Heart left ventricle (tissue), 16 donors: ENCODE measurements at regions of chr5 and their contacts with region 1.

Region 1: GRCh38 chr5:143413958-143414669 is 10.6 kb upstream of the NR3C1 start:
- DNase-seq: peak in 3 of 5 donors; percentile 28 to 53 (median 44)
- ATAC-seq: peak; percentile 58 to 87 (median 76)
- H3K4me3 ChIP-seq: no peak overlapping the region
- H3K27ac ChIP-seq: peak overlapping the region in 6 of 12 donors; percentile 3 to 36 (median 23)
- H3K4me1 ChIP-seq: peaks cover 0 to 20% (median 7%) of the 10 kb centered on the region in 12 donors
- H3K27me3 ChIP-seq: no peaks in the 10 kb centered on the region
- CTCF ChIP-seq: no peak
- POLR2A ChIP-seq: no peak

Region 2: DNA sequence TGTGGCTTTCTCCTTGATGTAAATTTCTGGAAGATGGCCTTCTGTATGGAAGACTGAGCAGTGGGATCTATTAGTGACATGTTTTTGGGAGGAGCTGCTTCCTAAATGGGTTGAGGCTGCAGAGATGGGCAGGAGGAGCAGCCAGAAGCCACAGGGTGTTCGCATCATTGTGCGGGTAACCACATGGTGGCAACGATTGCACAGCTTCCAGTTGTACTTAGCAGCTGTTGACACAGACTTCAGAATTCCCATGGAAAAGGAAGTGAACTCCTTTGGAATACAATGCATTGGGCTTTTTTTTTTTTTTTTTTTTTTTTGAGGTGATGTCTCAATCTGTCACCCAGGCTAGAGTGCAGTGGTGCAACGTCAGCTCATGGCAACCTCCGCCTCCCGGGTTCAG is 307.9 kb before region 1 on chr5:
- intact Hi-C with region 1: loop called in 3 of 10 experiments (anchors 5 to 10 kb)
- DNase-seq: peak in 4 of 5 donors; percentile 38 to 56 (median 50)
- ATAC-seq: peak; percentile 53 to 86 (median 68)
- H3K4me3 ChIP-seq: no peak overlapping the region
- H3K27ac ChIP-seq: no peak overlapping the region
- H3K4me1 ChIP-seq: peaks cover 0 to 66% (median 43%) of the 10 kb centered on the region in 12 donors
- H3K27me3 ChIP-seq: no peaks in the 10 kb centered on the region
- CTCF ChIP-seq: peak in 10 of 12 donors; percentile 8 to 55 (median 36)
- POLR2A ChIP-seq: no peak

Region 3: GRCh38 chr5:143456952-143457547 is 42.9 kb after region 1 on chr5:
- intact Hi-C with region 1: no loop called
- DNase-seq: no peak
- ATAC-seq: peak in 2 of 4 donors; percentile 45 to 80
- H3K4me3 ChIP-seq: no peak overlapping the region
- H3K27ac ChIP-seq: no peak overlapping the region
- H3K4me1 ChIP-seq: peaks cover 0 to 4% (median 0%) of the 10 kb centered on the region in 12 donors
- H3K27me3 ChIP-seq: no peaks in the 10 kb centered on the region
- CTCF ChIP-seq: no peak
- POLR2A ChIP-seq: no peak

Region 4: GRCh38 chr5:143495821-143496275 is 81.7 kb after region 1 on chr5:
- intact Hi-C with region 1: loop called in 2 of 10 experiments (anchors 5 kb)
- DNase-seq: peak in 3 of 5 donors; percentile 23 to 42 (median 40)
- ATAC-seq: peak; percentile 59 to 80 (median 68)
- H3K4me3 ChIP-seq: no peak overlapping the region
- H3K27ac ChIP-seq: peak overlapping the region in 8 of 12 donors; percentile 11 to 58 (median 18)
- H3K4me1 ChIP-seq: peaks cover 0 to 43% (median 16%) of the 10 kb centered on the region in 12 donors
- H3K27me3 ChIP-seq: no peaks in the 10 kb centered on the region
- CTCF ChIP-seq: no peak
- POLR2A ChIP-seq: no peak

Region 5: DNA sequence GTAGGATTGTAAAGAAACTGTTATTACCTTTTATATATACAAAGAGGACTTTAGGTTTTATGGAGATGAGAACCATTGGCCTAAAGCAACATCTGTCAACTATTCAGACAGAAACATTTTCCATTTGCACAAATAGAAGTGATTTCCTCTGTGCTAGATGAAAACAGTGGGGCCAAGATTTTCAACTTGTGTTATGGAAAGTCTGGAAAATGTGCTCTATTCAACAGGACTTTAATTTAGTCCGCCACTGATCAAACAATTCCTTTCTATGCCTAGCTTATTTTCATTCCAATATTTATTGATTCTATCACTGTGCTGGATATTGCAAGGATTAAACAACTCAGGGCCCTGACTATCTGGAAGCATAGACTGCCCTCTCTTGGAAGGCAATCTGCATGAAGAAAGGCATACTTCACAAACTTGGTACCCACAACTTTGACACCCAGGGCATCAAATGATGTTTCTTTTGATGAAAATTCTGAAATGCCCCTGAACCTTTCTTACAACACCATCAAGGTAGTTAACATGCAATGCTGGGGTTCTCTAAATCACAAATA is 271.2 kb after region 1 on chr5:
- intact Hi-C with region 1: loop called in 3 of 10 experiments (anchors 5 to 10 kb)
- DNase-seq: no peak
- ATAC-seq: no peak
- H3K4me3 ChIP-seq: no peak overlapping the region
- H3K27ac ChIP-seq: no peak overlapping the region
- H3K4me1 ChIP-seq: peaks cover 0 to 23% (median 10%) of the 10 kb centered on the region in 12 donors
- H3K27me3 ChIP-seq: no peaks in the 10 kb centered on the region
- CTCF ChIP-seq: peak in 9 of 12 donors; percentile 11 to 45 (median 29)
- POLR2A ChIP-seq: no peak

Region 6: DNA sequence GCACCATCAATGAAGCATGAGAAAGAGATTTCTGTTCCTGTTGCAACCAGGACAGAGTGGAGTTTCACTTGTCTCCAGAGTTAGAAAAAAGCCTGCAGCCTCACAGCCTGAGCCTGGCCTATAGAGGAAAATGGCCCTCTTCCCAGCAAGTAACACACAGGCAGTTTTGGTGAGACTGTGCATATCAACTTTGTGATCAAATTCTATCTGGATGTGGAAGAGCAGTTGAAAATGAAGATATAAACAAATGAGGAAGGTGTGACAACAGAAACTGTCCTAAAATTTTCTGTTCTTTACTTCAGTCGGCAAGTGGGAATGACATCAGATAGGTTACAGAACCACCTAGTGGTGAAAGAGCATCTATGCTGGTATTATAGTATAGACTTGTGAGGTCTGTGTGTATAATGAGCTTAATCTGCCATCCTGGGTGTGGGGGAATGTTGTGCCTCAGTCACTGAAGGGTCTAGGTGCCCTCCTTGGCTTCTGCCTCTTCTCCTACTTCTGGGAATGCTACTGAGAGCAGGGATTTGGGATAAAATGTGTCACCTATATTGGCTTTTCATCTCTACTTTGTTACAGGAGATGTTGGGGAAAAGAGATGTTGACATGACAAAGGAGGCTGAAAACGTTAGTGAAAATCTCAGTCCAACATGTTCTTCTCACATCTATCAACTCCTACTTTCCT is 728.2 kb after region 1 on chr5:
- intact Hi-C with region 1: loop called in 2 of 10 experiments (anchors 10 kb)
- DNase-seq: no peak
- ATAC-seq: peak; percentile 51 to 77 (median 62)
- H3K4me3 ChIP-seq: no peak overlapping the region
- H3K27ac ChIP-seq: no peak overlapping the region
- H3K4me1 ChIP-seq: peaks cover 0 to 34% (median 11%) of the 10 kb centered on the region in 12 donors
- H3K27me3 ChIP-seq: no peaks in the 10 kb centered on the region
- CTCF ChIP-seq: peak; percentile 36 to 78 (median 64)
- POLR2A ChIP-seq: no peak